Transverse colon (tissue), 4 donors: ENCODE measurements at regions of chr2 and their contacts with region 1.

Region 1: DNA sequence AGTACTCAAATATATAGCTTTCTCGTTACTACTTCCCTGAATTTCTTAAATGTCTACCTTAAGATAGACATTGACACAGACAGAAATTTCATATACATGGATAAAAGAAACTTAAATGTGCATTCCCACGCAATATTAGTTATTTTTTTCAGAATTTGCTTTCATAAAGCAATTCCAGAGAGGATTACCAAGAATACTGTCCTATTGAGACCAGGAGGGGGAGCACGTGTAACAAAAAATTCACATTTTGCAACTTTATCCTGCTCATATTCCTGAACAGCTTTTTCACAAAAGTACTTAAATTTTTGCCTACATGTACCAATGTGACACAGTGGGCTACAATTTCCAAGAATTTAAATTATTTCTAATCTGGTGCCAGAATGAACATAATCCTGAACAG is 30.7 kb upstream of the ERCC3 start:
- DNase-seq: no peak
- H3K4me3 ChIP-seq: no peak overlapping the region
- H3K27ac ChIP-seq: no peak overlapping the region
- H3K4me1 ChIP-seq: no peaks in the 10 kb centered on the region
- H3K27me3 ChIP-seq: no peaks in the 10 kb centered on the region
- CTCF ChIP-seq: peak; percentile 46 to 52 (median 50)
- EP300 ChIP-seq: no peak
- POLR2A ChIP-seq: no peak

Region 2: DNA sequence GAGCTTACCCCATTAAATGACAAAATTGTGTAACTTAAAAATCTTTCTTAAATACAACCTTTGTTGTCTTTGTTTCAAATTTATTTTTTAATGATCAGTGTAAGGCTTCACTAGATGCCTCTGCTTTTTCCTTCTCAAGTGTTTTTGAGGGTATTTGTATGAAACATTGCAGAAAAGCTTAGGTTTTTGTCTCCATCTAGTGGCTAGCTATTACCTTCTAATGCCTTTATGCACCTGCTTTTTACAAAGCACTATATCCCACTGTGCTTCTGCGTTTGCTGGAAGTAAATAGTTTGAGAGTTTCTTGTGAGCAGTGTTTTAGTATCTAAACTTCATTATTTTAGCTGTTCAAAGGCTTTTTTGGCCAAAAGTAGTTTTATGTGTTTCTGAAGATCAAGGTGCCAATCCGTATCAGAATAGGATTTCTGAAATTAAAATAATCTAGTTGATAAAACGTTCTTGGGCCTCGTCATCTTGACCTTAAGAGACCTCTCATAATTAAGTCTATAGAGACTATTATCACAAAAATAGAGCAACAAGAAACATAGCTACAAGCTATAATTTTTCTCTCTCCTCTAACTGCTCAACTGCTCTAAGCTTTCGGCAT is 154.7 kb after region 1 on chr2:
- in situ Hi-C with region 1: loop called in 2 of 4 experiments (anchors 10 to 25 kb)
- intact Hi-C with region 1: loop called (anchors 5 kb)
- DNase-seq: no peak
- H3K4me3 ChIP-seq: no peak overlapping the region
- H3K27ac ChIP-seq: no peak overlapping the region
- H3K4me1 ChIP-seq: peaks cover 0 to 9% (median 0%) of the 10 kb centered on the region in 4 donors
- H3K27me3 ChIP-seq: no peaks in the 10 kb centered on the region
- CTCF ChIP-seq: peak; percentile 53 to 75 (median 60)
- EP300 ChIP-seq: no peak
- POLR2A ChIP-seq: no peak

Region 3: DNA sequence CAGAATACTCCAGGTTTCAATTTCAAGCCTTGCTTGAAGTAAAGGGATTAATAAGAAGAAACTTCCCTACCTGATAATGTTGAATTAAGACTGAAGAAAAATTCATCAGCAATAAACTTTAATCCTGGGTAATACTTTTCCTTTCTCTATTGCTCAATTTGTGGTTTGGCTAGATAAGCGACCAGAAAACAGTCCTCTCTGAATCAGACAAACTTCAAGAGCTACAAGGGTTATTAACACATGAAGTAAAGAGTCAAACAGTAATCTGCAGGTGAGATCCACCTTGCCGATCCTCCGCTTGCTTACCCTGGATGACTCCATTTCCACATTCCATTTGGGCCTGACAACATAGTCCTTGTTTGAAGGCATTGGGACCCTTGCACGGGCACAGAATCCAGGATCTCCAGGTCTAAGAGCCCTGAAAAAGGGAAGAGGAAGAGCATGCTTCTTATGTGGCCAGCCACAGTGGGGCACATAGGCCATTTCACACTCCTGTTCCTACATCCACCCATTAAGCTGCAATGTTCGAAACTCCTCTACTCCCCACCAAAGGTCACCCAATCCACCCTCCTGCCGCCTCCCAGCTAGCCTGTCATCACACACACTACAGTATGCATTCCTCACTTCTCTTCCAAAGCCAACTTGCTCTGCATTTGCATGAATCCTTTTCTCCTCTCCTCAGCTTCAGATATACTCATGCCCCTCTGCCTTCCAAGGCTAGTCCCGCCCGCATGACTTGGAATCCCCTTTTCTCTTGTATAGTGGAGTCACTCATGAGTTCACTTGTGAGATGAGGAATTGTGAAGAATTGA is 161.8 kb after region 1 on chr2:
- in situ Hi-C with region 1: loop called in 2 of 4 experiments (anchors 10 to 25 kb)
- intact Hi-C with region 1: loop called (anchors 5 kb)
- DNase-seq: no peak
- H3K4me3 ChIP-seq: no peak overlapping the region
- H3K27ac ChIP-seq: no peak overlapping the region
- H3K4me1 ChIP-seq: no peaks in the 10 kb centered on the region
- H3K27me3 ChIP-seq: no peaks in the 10 kb centered on the region
- CTCF ChIP-seq: no peak
- EP300 ChIP-seq: no peak
- POLR2A ChIP-seq: no peak